Left cardiac atrium (tissue), 4 donors: ENCODE measurements at regions of chr2 and their contacts with region 1.

Region 1: DNA sequence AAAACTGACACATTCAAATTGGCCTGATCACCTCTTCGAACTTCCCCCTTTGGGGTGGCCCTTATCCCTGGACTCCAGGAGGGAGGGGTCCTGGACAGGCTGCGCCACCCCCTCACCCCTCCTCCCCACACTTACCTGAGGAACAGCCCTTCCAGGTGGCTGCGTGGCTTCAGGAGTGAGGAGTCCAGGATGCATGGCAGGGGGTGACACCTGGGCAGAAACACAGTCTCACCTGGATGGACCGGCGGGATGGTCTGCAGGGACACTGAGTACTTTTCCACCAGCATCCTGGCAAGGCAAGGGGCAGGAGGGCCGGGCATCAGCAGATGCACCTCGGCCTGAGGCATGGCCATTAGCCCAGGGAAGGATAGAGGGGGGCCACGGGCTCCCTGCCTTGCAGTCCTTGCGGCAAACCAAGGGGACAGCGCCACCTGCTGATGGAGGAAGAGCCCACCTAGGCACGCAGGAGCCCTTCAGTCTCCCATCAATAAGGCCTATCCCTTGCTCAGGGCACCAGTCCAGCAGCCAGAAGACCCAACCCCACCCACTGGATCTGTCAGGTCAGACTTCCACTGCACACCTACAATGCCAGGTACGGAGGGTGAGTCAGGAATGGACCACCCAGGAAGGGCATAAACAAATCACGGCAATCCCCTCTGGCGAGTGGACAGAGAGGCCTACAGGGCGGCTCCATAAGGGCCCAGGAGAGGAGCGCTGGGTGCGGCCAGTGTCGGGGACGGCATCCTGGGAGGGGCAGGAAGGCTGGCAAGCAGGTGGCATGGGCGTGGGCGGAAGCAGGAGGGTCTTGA is 26.0 kb downstream of the FAM178B start:
- DNase-seq: peak; percentile 93
- ATAC-seq: peak; percentile 96 to 98

Region 2: DNA sequence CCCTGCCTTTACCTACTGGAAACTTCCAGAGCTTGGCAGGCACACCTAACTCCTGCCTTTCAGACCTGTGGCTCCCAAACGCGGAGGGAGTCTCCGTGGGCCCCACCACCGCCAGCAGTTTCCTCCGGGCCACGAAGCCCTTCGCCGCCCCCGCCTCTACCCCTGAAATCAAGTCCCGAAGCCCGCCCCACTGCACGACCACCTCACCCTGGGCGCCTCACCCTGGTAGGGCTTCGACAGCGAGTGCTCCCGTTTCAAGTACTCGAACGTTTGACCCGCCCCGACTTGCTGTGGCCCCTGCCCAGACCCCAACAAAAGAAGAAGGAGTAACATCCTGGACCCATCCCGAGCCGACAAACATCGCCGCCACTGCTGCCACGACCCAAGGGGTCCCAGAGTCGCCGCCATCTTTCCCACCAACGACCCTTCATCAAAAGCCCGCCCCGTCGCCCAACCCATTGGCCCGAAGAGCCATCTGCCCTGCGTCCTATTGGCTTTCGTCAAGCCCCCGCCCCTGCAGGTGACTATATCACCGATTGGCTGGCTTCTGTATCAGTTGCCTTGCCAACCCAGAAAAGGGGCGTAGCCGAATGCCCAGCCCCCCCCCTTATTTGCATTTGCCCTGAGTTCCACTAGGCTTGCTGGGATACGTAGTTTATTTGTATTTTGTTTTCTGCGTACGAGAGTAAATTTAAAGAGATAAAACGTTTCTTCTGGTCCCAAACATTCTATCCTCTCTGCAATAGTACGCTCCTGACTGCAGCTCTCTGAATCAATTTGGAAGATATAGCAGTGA is 220.5 kb before region 1 on chr2 and contains the start of gene LMAN2L:
- intact Hi-C with region 1: loop called in 1 of 2 experiments (anchors 10 kb)
- DNase-seq: peak; percentile 99
- ATAC-seq: peak; percentile 100
- total RNA-seq, gene LMAN2L: 11.7 to 22.1 TPM

Region 3: DNA sequence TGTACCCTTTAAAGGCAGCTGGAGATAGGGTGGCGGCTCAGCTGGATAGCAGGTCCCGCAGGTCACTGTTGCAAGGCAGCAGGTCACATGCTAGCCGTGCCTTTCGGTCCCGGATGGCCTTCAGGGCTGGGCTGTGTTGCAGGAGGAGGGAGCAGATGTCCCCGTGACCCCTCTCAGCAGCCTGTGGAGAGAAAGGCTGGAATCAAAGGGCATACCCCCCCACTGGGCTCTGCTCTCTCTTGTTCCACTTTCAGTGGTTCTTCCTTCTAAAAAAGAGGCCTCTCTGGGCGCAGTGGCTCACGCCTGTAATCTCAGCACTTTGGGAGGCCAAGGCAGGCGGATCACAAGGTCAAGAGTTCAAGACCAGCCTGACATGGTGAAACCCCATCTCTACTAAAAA is 112.1 kb before region 1 on chr2:
- intact Hi-C with region 1: no loop called
- DNase-seq: no peak
- ATAC-seq: no peak

Region 4: DNA sequence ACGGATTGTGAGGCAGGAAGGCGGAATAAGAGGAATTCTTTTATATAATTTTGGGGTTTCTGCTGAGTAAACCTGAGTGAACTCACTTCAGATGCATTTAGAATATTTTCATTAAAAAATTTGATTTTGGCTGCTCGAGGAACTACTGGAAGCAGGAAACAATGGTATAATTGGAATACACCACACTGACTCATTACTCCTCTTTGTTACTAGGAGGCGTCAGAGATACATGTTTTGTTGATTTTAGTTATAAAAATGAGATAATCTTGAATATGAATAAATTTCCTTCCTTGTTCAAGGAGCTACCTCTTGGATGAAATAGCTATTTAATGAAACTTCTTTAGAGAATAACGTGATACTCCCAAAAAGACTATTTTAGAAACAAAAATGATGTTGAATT is 250.0 kb after region 1 on chr2:
- intact Hi-C with region 1: no loop called
- DNase-seq: no peak
- ATAC-seq: no peak